CD4-positive, alpha-beta T cell (primary cell): ENCODE measurements at regions of chr22 and their contacts with region 1.

Region 1: GRCh38 chr22:40024201-40025061 is 29.7 kb downstream of the FAM83F start:
- DNase-seq: peak; percentile 40 to 80 (median 53)
- ATAC-seq: peak; percentile 82
- H3K4me3 ChIP-seq: no peak overlapping the region
- H3K4me3 Mint-ChIP-seq: no peak overlapping the region
- H3K27ac ChIP-seq: no peak overlapping the region
- H3K27ac Mint-ChIP-seq: no peak overlapping the region
- H3K4me1 ChIP-seq: peaks cover 7% of the 10 kb centered on the region
- H3K4me1 Mint-ChIP-seq: peaks cover 4% of the 10 kb centered on the region
- H3K27me3 ChIP-seq: no peaks in the 10 kb centered on the region
- H3K27me3 Mint-ChIP-seq: no peaks in the 10 kb centered on the region
- CTCF ChIP-seq: peak; percentile 93

Region 2: GRCh38 chr22:39490135-39490798 is 534.2 kb before region 1 on chr22:
- CTCF ChIA-PET with region 1: interaction called, 8 read pairs
- POLR2A ChIA-PET with region 1: interaction called, 3 read pairs
- intact Hi-C with region 1: loop called in 1 of 2 experiments (anchors 5 kb)
- DNase-seq: peak; percentile 52 to 91 (median 76)
- ATAC-seq: peak; percentile 100
- H3K4me3 ChIP-seq: no peak overlapping the region
- H3K4me3 Mint-ChIP-seq: no peak overlapping the region
- H3K27ac ChIP-seq: no peak overlapping the region
- H3K27ac Mint-ChIP-seq: no peak overlapping the region
- H3K4me1 ChIP-seq: peaks cover 18% of the 10 kb centered on the region
- H3K4me1 Mint-ChIP-seq: peaks cover 12% of the 10 kb centered on the region
- H3K27me3 ChIP-seq: no peaks in the 10 kb centered on the region
- H3K27me3 Mint-ChIP-seq: no peaks in the 10 kb centered on the region
- CTCF ChIP-seq: no peak

Region 3: GRCh38 chr22:39622881-39623367 is 401.5 kb before region 1 on chr22:
- CTCF ChIA-PET with region 1: interaction called, 4 read pairs
- POLR2A ChIA-PET with region 1: no interaction called
- intact Hi-C with region 1: loop called in 1 of 2 experiments (anchors 2 kb)
- DNase-seq: peak; percentile 59 to 85 (median 65)
- ATAC-seq: peak; percentile 75
- H3K4me3 ChIP-seq: no peak overlapping the region
- H3K4me3 Mint-ChIP-seq: no peak overlapping the region
- H3K27ac ChIP-seq: no peak overlapping the region
- H3K27ac Mint-ChIP-seq: no peak overlapping the region
- H3K4me1 ChIP-seq: peaks cover 12% of the 10 kb centered on the region
- H3K4me1 Mint-ChIP-seq: peaks cover 10% of the 10 kb centered on the region
- H3K27me3 ChIP-seq: no peaks in the 10 kb centered on the region
- H3K27me3 Mint-ChIP-seq: peaks cover 6% of the 10 kb centered on the region
- CTCF ChIP-seq: peak; percentile 72

Region 4: DNA sequence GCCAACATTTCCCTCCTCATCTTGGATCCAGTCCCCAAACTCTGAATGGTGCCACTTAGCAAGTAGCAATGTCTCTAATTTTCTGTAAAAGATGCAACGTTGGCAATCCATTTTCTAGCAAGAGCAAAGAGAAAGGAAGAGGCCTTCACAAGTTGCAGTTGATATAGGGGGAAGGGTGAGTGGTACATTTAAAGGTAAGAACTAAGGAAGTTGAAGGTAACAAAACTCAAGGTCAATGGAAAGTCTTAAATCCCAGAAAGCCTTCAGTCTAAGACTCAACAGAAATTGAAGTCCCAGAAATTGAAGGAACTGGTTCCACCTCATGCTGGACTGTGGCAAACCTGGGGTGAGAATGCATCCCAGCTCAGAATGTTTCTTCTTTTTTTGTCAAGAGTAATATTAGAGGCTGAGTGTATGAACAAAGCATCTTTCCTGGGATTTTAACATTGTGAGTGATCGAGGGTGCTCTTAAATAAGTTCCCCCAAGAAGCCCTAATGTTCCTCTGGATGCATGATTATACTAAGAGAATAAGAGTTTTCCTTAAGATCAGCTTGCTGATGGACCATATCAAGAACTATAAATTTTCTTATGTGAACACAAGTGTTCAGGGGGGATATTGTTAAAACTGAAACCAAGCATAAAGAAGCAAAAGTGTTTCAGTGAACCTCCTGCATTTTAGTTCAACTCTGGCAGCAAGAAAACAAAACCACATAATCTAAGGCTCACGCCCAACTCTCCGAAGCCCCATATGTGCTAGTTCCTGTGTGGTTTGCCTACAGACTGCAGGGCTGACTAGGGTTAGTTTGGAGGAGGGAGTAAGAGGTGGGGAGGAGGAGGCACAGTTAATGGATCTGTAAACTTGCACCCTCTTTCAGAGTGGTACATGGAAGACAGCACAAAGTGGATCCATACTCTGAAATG is 123.9 kb before region 1 on chr22 and contains the start of gene GRAP2:
- CTCF ChIA-PET with region 1: interaction called, 6 read pairs
- POLR2A ChIA-PET with region 1: interaction called, 3 read pairs
- intact Hi-C with region 1: loop called in 1 of 2 experiments (anchors 2 kb)
- DNase-seq: peak; percentile 54 to 94 (median 66)
- ATAC-seq: peak; percentile 96
- H3K4me3 ChIP-seq: peak within 1 kb of the TSS; percentile 70
- H3K4me3 Mint-ChIP-seq: peak within 1 kb of the TSS; percentile 89
- H3K27ac ChIP-seq: peak within 1 kb of the TSS; percentile 53 to 66
- H3K27ac Mint-ChIP-seq: no peak within 1 kb of the TSS
- H3K4me1 ChIP-seq: peaks cover 28% of the 10 kb centered on the region
- H3K4me1 Mint-ChIP-seq: peaks cover 23% of the 10 kb centered on the region
- H3K27me3 ChIP-seq: no peaks in the 10 kb centered on the region
- H3K27me3 Mint-ChIP-seq: no peaks in the 10 kb centered on the region
- CTCF ChIP-seq: no peak
- total RNA-seq, gene GRAP2: 65.3 to 75.6 TPM

Region 5: DNA sequence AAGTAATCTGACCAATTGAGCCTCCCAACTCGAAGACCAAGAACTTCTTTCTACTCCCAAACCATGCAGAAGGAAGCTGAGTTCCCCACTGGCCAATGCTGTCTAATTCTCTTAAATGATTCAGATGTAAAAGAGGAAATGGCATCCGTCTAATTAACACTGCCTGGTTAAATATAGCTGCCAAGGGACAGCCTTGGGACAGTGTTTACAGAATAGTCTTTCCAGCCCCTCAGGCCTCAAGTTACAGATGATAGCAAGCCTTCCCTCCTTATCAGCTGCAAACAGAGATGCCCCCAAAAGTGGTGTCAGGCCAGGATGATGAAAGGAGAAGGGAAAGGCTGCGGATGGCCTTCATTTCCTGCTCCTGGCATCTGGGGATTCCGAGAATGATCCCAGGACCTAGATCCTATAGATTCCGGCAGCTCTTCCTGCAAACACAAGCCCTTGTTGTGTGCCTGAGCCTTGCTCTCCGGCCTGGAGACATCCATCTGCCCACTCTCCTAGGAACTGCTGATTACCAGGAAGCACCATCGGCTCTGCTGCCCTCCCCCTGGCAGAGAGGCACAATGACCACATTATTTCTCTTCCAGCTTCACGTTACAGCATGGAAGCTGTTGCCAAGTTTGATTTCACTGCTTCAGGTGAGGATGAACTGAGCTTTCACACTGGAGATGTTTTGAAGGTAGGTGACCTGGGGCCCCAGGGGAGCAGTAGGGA is 77.8 kb before region 1 on chr22:
- CTCF ChIA-PET with region 1: interaction called, 15 read pairs
- POLR2A ChIA-PET with region 1: interaction called, 4 read pairs
- intact Hi-C with region 1: loop called (anchors 2 to 5 kb)
- DNase-seq: no peak
- ATAC-seq: no peak
- H3K4me3 ChIP-seq: no peak overlapping the region
- H3K4me3 Mint-ChIP-seq: peak overlapping the region; percentile 69
- H3K27ac ChIP-seq: peak overlapping the region; percentile 26 to 37
- H3K27ac Mint-ChIP-seq: no peak overlapping the region
- H3K4me1 ChIP-seq: peaks cover 94% of the 10 kb centered on the region
- H3K4me1 Mint-ChIP-seq: peaks cover 99% of the 10 kb centered on the region
- H3K27me3 ChIP-seq: no peaks in the 10 kb centered on the region
- H3K27me3 Mint-ChIP-seq: no peaks in the 10 kb centered on the region
- CTCF ChIP-seq: no peak

Region 6: GRCh38 chr22:39959640-39960447 is 64.6 kb before region 1 on chr22 and contains the start of gene TMA7B:
- CTCF ChIA-PET with region 1: no interaction called
- POLR2A ChIA-PET with region 1: no interaction called
- intact Hi-C with region 1: loop called in 1 of 2 experiments (anchors 5 kb)
- DNase-seq: peak in 13 of 14 experiments; percentile 25 to 70 (median 43)
- ATAC-seq: peak; percentile 76
- H3K4me3 ChIP-seq: no peak within 1 kb of the TSS
- H3K4me3 Mint-ChIP-seq: peak within 1 kb of the TSS; percentile 63
- H3K27ac ChIP-seq: peak within 1 kb of the TSS; percentile 49 to 57
- H3K27ac Mint-ChIP-seq: peak within 1 kb of the TSS; percentile 77
- H3K4me1 ChIP-seq: peaks cover 72% of the 10 kb centered on the region
- H3K4me1 Mint-ChIP-seq: peaks cover 68% of the 10 kb centered on the region
- H3K27me3 ChIP-seq: no peaks in the 10 kb centered on the region
- H3K27me3 Mint-ChIP-seq: no peaks in the 10 kb centered on the region
- CTCF ChIP-seq: peak; percentile 52
- total RNA-seq, gene TMA7B: 5.7 to 6.5 TPM

Region 7: DNA sequence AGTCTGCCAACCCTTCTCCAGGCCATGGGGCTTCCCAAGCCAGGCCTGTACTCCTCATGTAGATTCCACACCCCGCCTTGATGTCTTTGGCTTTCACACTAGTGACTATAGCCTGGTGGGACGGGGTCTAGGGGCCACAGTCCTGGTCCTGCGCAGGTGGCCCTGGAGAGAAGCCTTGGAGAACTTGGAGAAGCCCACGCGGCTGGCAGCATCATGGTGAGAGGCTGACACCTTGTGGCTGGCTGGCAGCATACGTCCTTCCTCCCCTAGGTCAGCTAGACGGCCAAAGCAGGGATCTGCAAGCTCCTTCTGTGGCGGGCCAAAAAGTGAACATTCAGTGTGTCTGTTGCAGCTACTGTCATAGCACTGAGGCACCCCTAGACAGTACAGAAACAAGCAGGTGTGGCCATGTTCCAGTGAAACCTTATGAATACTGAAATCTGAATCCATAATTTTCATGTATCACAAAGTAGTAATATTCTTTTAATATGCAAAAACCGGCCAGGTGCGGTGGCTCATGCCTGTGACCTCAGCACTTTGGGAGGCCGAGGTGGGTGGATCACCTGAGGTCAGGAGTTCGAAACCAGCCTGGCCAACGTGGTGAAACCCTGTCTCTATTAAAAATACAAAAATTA is 12.3 kb after region 1 on chr22:
- CTCF ChIA-PET with region 1: interaction called, 10 read pairs
- POLR2A ChIA-PET with region 1: no interaction called
- intact Hi-C with region 1: no loop called
- DNase-seq: peak in 13 of 14 experiments; percentile 25 to 77 (median 39)
- ATAC-seq: peak; percentile 74
- H3K4me3 ChIP-seq: no peak overlapping the region
- H3K4me3 Mint-ChIP-seq: no peak overlapping the region
- H3K27ac ChIP-seq: no peak overlapping the region
- H3K27ac Mint-ChIP-seq: no peak overlapping the region
- H3K4me1 ChIP-seq: no peaks in the 10 kb centered on the region
- H3K4me1 Mint-ChIP-seq: no peaks in the 10 kb centered on the region
- H3K27me3 ChIP-seq: peaks cover 0 to 6% of the 10 kb centered on the region in 2 experiments
- H3K27me3 Mint-ChIP-seq: peaks cover 12% of the 10 kb centered on the region
- CTCF ChIP-seq: peak; percentile 63